Natural killer cell (primary cell): ENCODE measurements at regions of chr10 and their contacts with region 1.

Region 1: DNA sequence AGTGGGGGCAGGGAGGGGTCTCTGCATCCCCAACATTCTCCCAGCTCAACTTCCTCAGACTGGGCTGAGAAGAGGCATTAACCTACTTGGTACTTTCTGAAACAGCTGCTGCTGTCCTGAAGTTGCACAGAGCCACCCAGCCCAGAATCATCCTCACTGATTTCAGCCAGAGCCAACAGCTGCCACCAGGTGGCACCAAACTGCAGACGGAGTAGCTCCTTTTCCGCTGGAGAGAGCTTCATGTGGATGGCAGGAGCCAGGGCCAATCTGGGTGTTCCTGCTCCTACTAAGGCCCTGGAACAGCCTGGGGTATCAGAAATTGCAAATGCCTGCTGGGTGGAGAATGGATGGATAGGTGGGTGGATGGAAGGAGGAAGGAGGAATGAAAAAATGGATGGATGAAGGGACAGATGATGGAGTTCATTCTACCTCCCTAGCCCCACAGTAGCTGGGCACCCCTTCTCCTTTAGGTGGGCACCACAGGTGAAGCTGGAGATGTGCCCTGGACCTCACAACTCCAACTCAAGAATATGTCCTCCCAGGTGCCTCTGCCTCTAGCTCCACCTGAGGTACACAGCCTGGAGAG is 11.8 kb upstream of the DRGX start:
- DNase-seq: peak; percentile 70 to 82
- ATAC-seq: peak; percentile 65 to 91 (median 85)
- H3K4me3 ChIP-seq: no peak overlapping the region
- H3K4me3 Mint-ChIP-seq: no peak overlapping the region
- H3K27ac ChIP-seq: no peak overlapping the region
- H3K27ac Mint-ChIP-seq: no peak overlapping the region
- H3K4me1 ChIP-seq: peaks cover 5% of the 10 kb centered on the region
- H3K4me1 Mint-ChIP-seq: peaks cover 4 to 5% of the 10 kb centered on the region in 2 donors
- H3K27me3 ChIP-seq: peaks cover 2% of the 10 kb centered on the region
- H3K27me3 Mint-ChIP-seq: peaks cover 47 to 49% of the 10 kb centered on the region in 2 donors
- CTCF ChIP-seq: peak; percentile 80

Region 2: GRCh38 chr10:49512121-49512809 is 104.6 kb after region 1 on chr10:
- intact Hi-C with region 1: loop called (anchors 1 kb)
- DNase-seq: peak in 1 of 2 donors; percentile 63
- ATAC-seq: peak; percentile 68 to 77 (median 76)
- H3K4me3 ChIP-seq: no peak overlapping the region
- H3K4me3 Mint-ChIP-seq: no peak overlapping the region
- H3K27ac ChIP-seq: no peak overlapping the region
- H3K27ac Mint-ChIP-seq: no peak overlapping the region
- H3K4me1 ChIP-seq: peaks cover 10% of the 10 kb centered on the region
- H3K4me1 Mint-ChIP-seq: peaks cover 17 to 29% of the 10 kb centered on the region in 2 donors
- H3K27me3 ChIP-seq: no peaks in the 10 kb centered on the region
- H3K27me3 Mint-ChIP-seq: no peaks in the 10 kb centered on the region
- CTCF ChIP-seq: peak; percentile 79

Region 3: DNA sequence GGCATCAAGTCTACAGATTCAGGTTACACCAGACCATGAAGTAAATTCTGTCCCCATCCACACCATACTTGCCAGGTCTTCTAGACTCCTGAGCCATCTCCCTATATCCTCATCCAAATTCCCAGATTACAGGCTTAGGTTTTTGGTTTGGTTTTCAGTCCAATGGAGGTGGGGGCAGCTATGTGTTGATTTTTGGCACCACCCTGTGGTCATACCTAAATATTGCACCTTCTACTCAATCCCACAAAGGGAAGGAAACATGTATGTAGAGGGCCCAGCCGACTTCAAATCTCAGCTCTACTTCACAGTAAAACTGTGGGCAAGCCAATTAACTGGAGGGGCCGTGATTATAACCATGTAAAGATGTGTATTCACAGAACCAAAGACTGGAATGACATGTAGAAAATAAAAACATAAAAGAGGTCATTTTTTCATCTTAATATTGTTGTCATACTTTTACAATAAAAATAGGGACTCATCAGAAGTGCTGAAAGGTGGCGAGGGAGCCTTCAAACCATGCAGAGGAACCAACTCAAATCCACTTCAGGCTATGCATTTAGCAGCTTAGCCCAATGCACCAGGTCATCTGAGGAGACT is 111.4 kb after region 1 on chr10:
- intact Hi-C with region 1: loop called (anchors 1 kb)
- DNase-seq: peak in 1 of 2 donors; percentile 72
- ATAC-seq: peak; percentile 79 to 84 (median 82)
- H3K4me3 ChIP-seq: no peak overlapping the region
- H3K4me3 Mint-ChIP-seq: no peak overlapping the region
- H3K27ac ChIP-seq: no peak overlapping the region
- H3K27ac Mint-ChIP-seq: no peak overlapping the region
- H3K4me1 ChIP-seq: no peaks in the 10 kb centered on the region
- H3K4me1 Mint-ChIP-seq: peaks cover 9% of the 10 kb centered on the region in 2 donors
- H3K27me3 ChIP-seq: no peaks in the 10 kb centered on the region
- H3K27me3 Mint-ChIP-seq: no peaks in the 10 kb centered on the region
- CTCF ChIP-seq: peak; percentile 77

Region 4: GRCh38 chr10:49606981-49607535 is 199.4 kb after region 1 on chr10:
- intact Hi-C with region 1: loop called (anchors 1 kb)
- DNase-seq: peak; percentile 62 to 69
- ATAC-seq: peak; percentile 69 to 89 (median 84)
- H3K4me3 ChIP-seq: no peak overlapping the region
- H3K4me3 Mint-ChIP-seq: no peak overlapping the region
- H3K27ac ChIP-seq: no peak overlapping the region
- H3K27ac Mint-ChIP-seq: no peak overlapping the region
- H3K4me1 ChIP-seq: peaks cover 5% of the 10 kb centered on the region
- H3K4me1 Mint-ChIP-seq: peaks cover 11 to 14% of the 10 kb centered on the region in 2 donors
- H3K27me3 ChIP-seq: peaks cover 20% of the 10 kb centered on the region
- H3K27me3 Mint-ChIP-seq: peaks cover 38 to 72% of the 10 kb centered on the region in 2 donors
- CTCF ChIP-seq: no peak